ENCODE measurements at regions of chr1 and their contacts with region 1.

Region 1: DNA sequence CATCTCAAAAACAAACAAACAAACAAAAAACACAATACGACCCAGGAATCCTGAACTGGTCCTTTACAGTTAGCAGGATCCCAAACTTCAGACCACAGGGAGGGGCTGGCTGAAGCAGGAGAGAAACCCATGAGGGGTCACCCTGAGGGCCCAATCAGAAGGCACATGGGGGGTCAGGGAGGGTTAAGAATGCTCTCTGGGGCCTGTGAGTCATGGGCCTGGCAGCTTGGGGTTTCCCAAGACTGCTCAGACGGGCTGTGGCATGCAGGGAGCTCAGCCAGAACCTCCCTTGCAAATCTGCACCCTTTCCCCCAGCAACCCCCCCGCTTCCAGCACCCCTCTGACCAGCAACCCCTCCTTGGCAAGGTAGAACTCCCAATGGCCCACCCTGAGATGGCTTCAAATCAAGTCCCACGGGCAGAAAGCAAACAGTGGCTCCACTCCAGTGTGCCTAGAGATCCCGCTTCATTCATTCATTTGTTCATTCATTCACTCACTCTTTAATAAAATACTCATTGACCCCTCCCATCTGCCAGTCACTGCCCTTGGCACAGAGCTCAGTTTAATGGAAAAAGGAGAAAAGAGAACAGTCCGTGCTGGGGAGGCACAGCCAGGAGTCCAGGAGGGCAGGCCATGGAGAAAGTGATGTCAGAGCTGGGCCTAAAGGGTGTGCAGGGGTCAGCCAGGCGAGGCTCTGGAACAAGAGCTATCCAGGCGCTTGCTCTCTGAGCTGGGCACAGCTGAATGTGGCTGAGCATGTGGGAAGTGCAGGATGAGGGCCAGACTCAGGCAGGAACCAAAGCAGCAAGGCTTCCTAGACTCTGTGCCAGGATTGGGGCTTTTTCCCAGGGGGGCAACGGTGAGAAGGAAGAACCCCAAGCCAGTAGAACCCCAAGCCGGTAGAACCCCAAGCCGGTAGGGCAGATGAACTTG is 8.2 kb downstream of the UQCRHL start:
- DNase-seq: peak; percentile 80
- ATAC-seq: peak; percentile 84 to 89

Region 2: GRCh38 chr1:15323351-15323988 is 475.8 kb before region 1 on chr1:
- intact Hi-C with region 1: no loop called
- DNase-seq: peak; percentile 73
- ATAC-seq: peak; percentile 85

Region 3: GRCh38 chr1:16055613-16056520 is 256.6 kb after region 1 on chr1:
- intact Hi-C with region 1: loop called in 1 of 2 experiments (anchors 10 kb)
- DNase-seq: peak; percentile 89
- ATAC-seq: peak; percentile 83 to 86

Measured in left cardiac atrium (tissue), 4 donors.